RWPE1 (cell line): ENCODE measurements at regions of chr1 and their contacts with region 1.

Region 1: GRCh38 chr1:160291248-160292220 is 6.6 kb upstream of the PEX19 start:
- DNase-seq: peak; percentile 71
- H3K27ac ChIP-seq: no peak overlapping the region
- CTCF ChIP-seq: peak; percentile 82

Region 2: DNA sequence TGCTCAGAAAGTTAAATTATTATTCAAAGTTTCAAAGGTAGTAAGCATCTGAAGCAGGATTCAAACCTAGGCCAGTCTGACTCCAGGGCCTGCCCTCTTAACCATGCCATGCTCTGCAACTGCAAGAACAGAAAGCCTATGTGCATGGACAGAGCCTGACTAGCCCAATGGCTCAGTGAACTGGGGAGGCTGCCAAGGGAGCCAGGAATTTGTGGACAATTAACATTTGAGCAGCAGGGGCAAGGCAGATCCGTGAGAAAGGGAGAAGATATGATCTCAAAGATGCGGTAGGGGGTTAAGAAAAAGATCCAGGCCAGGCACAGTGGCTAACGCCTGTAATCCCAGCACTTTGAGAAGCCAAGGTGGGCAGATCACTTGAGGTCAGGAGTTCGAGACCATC is 146.6 kb before region 1 on chr1:
- CTCF ChIA-PET with region 1: interaction called, 11 read pairs
- POLR2A ChIA-PET with region 1: no interaction called
- DNase-seq: no peak
- H3K27ac ChIP-seq: no peak overlapping the region
- CTCF ChIP-seq: no peak

Region 3: GRCh38 chr1:160193091-160193819 is 98.3 kb before region 1 on chr1:
- CTCF ChIA-PET with region 1: interaction called, 30 read pairs
- POLR2A ChIA-PET with region 1: no interaction called
- DNase-seq: peak; percentile 79
- H3K27ac ChIP-seq: no peak overlapping the region
- CTCF ChIP-seq: peak; percentile 91